Activated CD4-positive, alpha-beta T cell treated with anti-CD3 and anti-CD28 coated beads, Interleukin-2, amount 10 ng/mL, durations not matched to agents 24 days and 14 days (primary cell): ENCODE measurements at regions of chr15 and their contacts with region 1.

Region 1: DNA sequence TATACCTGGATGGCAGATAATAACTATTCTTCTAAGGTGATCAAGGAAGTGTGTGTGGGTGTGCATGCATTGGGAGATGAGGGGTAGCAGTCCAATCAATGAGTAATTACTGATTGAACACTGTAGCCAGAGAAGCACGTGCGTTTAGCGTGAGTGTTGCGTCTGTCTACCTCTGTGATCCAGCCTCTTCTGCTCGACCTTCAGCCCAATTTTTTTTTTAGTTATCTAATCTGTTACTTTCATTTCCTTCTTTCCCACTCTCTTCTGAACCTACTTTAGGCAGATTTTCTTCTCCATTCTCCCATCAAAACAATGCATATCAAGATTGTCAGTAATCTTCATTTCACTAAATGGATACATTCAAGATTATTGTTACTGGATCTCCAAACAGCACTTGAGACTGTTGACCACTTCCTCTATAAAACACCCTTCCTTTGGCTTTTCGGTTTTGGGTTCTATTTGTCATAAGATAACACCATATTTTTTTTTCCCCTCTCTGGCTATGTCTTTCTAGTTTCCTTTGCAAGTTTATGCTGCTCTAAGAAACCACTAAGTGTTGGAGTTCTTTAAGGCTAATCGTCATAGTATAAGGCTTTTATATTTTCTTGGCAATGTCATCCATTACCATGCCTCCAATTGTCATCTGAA is 41.0 kb downstream of the MCTP2 start:
- DNase-seq: no peak
- H3K4me3 Mint-ChIP-seq: no peak overlapping the region
- H3K27ac Mint-ChIP-seq: no peak overlapping the region
- H3K4me1 Mint-ChIP-seq: peaks cover 17% of the 10 kb centered on the region
- H3K27me3 Mint-ChIP-seq: no peaks in the 10 kb centered on the region

Region 2: GRCh38 chr15:92665100-92665555 is 1607.2 kb before region 1 on chr15:
- intact Hi-C with region 1: no loop called
- DNase-seq: no peak
- H3K4me3 Mint-ChIP-seq: no peak overlapping the region
- H3K27ac Mint-ChIP-seq: no peak overlapping the region
- H3K4me1 Mint-ChIP-seq: peaks cover 4% of the 10 kb centered on the region
- H3K27me3 Mint-ChIP-seq: peaks cover 12% of the 10 kb centered on the region

Region 3: GRCh38 chr15:94174399-94174802 is 98.0 kb before region 1 on chr15:
- intact Hi-C with region 1: loop called (anchors 1 kb)
- DNase-seq: peak; percentile 66
- H3K4me3 Mint-ChIP-seq: peak overlapping the region; percentile 28
- H3K27ac Mint-ChIP-seq: peak overlapping the region; percentile 8
- H3K4me1 Mint-ChIP-seq: peaks cover 39% of the 10 kb centered on the region
- H3K27me3 Mint-ChIP-seq: no peaks in the 10 kb centered on the region

Region 4: GRCh38 chr15:94206463-94207167 is 65.8 kb before region 1 on chr15:
- intact Hi-C with region 1: loop called (anchors 2 kb)
- DNase-seq: peak; percentile 89
- H3K4me3 Mint-ChIP-seq: peak overlapping the region; percentile 80
- H3K27ac Mint-ChIP-seq: peak overlapping the region; percentile 96
- H3K4me1 Mint-ChIP-seq: peaks cover 27% of the 10 kb centered on the region
- H3K27me3 Mint-ChIP-seq: peaks cover 7% of the 10 kb centered on the region

Region 5: GRCh38 chr15:94287794-94288246 is 15.4 kb after region 1 on chr15:
- intact Hi-C with region 1: loop called (anchors 2 kb)
- DNase-seq: peak; percentile 89
- H3K4me3 Mint-ChIP-seq: peak overlapping the region; percentile 81
- H3K27ac Mint-ChIP-seq: peak overlapping the region; percentile 86
- H3K4me1 Mint-ChIP-seq: peaks cover 43% of the 10 kb centered on the region
- H3K27me3 Mint-ChIP-seq: no peaks in the 10 kb centered on the region

Region 6: GRCh38 chr15:94387849-94388441 is 115.6 kb after region 1 on chr15:
- intact Hi-C with region 1: no loop called
- DNase-seq: peak; percentile 80
- H3K4me3 Mint-ChIP-seq: peak overlapping the region; percentile 59
- H3K27ac Mint-ChIP-seq: peak overlapping the region; percentile 59
- H3K4me1 Mint-ChIP-seq: peaks cover 25% of the 10 kb centered on the region
- H3K27me3 Mint-ChIP-seq: no peaks in the 10 kb centered on the region

Region 7: GRCh38 chr15:95470997-95471689 is 1198.8 kb after region 1 on chr15:
- intact Hi-C with region 1: no loop called
- DNase-seq: no peak
- H3K4me3 Mint-ChIP-seq: no peak overlapping the region
- H3K27ac Mint-ChIP-seq: no peak overlapping the region
- H3K4me1 Mint-ChIP-seq: no peaks in the 10 kb centered on the region
- H3K27me3 Mint-ChIP-seq: peaks cover 7% of the 10 kb centered on the region